Activated CD4-positive, alpha-beta T cell treated with anti-CD3 and anti-CD28 coated beads for 36 hours (primary cell): ENCODE measurements at regions of chr12 and their contacts with region 1.

Region 1: GRCh38 chr12:104456417-104456949 is at the start of gene CHST11:
- DNase-seq: peak; percentile 88
- ATAC-seq: peak; percentile 76
- H3K4me3 Mint-ChIP-seq: peak within 1 kb of the TSS; percentile 91
- H3K27ac Mint-ChIP-seq: peak within 1 kb of the TSS; percentile 97
- H3K4me1 Mint-ChIP-seq: peaks cover 35% of the 10 kb centered on the region
- H3K27me3 Mint-ChIP-seq: no peaks in the 10 kb centered on the region
- total RNA-seq, gene CHST11: 33.3 to 33.6 TPM

Region 2: GRCh38 chr12:103930034-103930786 is 526.3 kb before region 1 on chr12 and contains the start of gene HSP90B1:
- CTCF ChIA-PET with region 1: no interaction called
- POLR2A ChIA-PET with region 1: no interaction called
- intact Hi-C with region 1: loop called in 1 of 2 experiments (anchors 2 kb)
- DNase-seq: peak; percentile 100
- ATAC-seq: peak; percentile 75
- H3K4me3 Mint-ChIP-seq: peak within 1 kb of the TSS; percentile 77
- H3K27ac Mint-ChIP-seq: peak within 1 kb of the TSS; percentile 100
- H3K4me1 Mint-ChIP-seq: peaks cover 54% of the 10 kb centered on the region
- H3K27me3 Mint-ChIP-seq: no peaks in the 10 kb centered on the region
- total RNA-seq, gene HSP90B1: 384 to 394 TPM

Region 3: GRCh38 chr12:104473374-104473983 is 17.0 kb after region 1 on chr12:
- CTCF ChIA-PET with region 1: interaction called, 19 read pairs
- POLR2A ChIA-PET with region 1: no interaction called
- intact Hi-C with region 1: no loop called
- DNase-seq: no peak
- ATAC-seq: peak; percentile 40
- H3K4me3 Mint-ChIP-seq: peak overlapping the region; percentile 48
- H3K27ac Mint-ChIP-seq: peak overlapping the region; percentile 52
- H3K4me1 Mint-ChIP-seq: peaks cover 79% of the 10 kb centered on the region
- H3K27me3 Mint-ChIP-seq: no peaks in the 10 kb centered on the region

Region 4: GRCh38 chr12:104569346-104570173 is 113.1 kb after region 1 on chr12:
- CTCF ChIA-PET with region 1: no interaction called
- POLR2A ChIA-PET with region 1: no interaction called
- intact Hi-C with region 1: loop called in 1 of 2 experiments (anchors 2 kb)
- DNase-seq: peak; percentile 61
- ATAC-seq: peak; percentile 67
- H3K4me3 Mint-ChIP-seq: no peak overlapping the region
- H3K27ac Mint-ChIP-seq: peak overlapping the region; percentile 33
- H3K4me1 Mint-ChIP-seq: peaks cover 49% of the 10 kb centered on the region
- H3K27me3 Mint-ChIP-seq: no peaks in the 10 kb centered on the region

Region 5: GRCh38 chr12:104671407-104672098 is 215.1 kb after region 1 on chr12:
- CTCF ChIA-PET with region 1: interaction called, 3 read pairs
- POLR2A ChIA-PET with region 1: no interaction called
- intact Hi-C with region 1: loop called (anchors 1 to 2 kb)
- DNase-seq: peak; percentile 95
- ATAC-seq: peak; percentile 84
- H3K4me3 Mint-ChIP-seq: peak overlapping the region; percentile 41
- H3K27ac Mint-ChIP-seq: peak overlapping the region; percentile 93
- H3K4me1 Mint-ChIP-seq: peaks cover 60% of the 10 kb centered on the region
- H3K27me3 Mint-ChIP-seq: no peaks in the 10 kb centered on the region

Region 6: DNA sequence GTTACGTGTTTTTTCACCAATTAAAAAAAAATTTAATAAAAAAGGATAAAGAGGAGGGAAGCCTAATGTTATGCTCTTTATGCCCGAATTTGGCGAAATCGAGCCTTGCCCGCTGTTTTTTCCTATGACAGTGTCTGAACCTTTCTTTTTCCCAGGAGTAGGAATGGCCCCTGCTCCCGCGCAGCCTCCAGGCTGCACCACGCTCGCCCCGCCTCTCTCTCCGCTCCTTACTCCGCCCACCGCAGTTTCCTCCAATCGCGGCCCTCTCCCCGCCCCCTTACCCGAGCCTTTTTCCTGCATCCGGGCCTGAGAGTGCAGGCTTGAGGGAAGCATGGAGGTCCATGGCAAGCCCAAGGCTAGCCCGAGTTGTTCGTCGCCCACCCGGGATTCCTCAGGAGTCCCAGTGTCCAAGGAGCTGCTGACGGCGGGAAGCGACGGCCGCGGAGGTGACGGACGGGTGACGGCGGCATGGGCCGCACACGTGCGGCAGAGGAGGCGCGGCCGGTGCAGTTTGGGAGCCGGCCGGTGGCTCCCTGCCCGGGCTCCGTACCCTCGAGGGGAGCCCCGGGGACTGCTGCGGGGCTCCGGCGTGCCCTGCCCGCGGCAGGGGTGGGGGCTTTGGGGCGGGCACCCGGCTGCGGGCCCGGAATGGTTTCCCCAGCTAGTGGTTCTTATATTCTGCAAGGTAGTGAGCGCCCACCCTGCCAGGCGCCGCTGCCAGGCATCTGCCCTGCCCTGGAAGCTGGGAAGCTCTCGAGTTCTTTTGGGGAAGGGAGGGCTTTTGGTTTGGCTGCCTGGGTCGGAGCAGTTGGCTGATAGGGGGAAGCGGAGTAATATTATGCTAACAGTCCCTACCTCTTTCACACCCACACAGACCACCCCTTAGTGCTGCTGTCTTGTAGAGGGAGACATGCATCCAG is 529.8 kb after region 1 on chr12 and contains the start of gene NOPCHAP1:
- CTCF ChIA-PET with region 1: no interaction called
- POLR2A ChIA-PET with region 1: interaction called, 5 read pairs
- intact Hi-C with region 1: loop called in 1 of 2 experiments (anchors 1 kb)
- DNase-seq: peak; percentile 91
- ATAC-seq: peak; percentile 98
- H3K4me3 Mint-ChIP-seq: peak within 1 kb of the TSS; percentile 78
- H3K27ac Mint-ChIP-seq: peak within 1 kb of the TSS; percentile 40
- H3K4me1 Mint-ChIP-seq: peaks cover 48% of the 10 kb centered on the region
- H3K27me3 Mint-ChIP-seq: peaks cover 11% of the 10 kb centered on the region
- total RNA-seq, gene NOPCHAP1: 31.1 to 35.2 TPM